Ovary (tissue), 10 donors: ENCODE measurements at regions of chr18 and their contacts with region 1.

Region 1: DNA sequence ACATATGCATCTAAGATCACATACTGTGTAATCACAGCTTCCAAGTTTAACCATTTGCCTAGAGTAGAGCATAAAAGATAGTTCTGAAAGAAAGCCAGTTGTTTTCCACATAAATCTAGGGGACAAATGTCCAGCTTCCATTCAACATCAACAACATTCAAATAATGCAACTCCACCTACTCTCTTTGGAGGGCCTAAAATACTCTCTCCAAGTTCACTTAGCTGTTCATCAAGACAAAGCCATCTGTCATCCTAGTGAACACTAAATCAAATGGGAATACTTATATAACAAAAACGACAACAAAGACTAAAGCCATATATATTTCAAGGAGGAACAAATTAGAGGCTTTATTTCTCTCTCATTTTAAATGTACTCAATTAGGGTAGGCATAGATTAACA is 221.5 kb upstream of the CDH2 start:
- DNase-seq: no peak
- H3K4me3 ChIP-seq: no peak overlapping the region
- H3K27ac ChIP-seq: no peak overlapping the region
- H3K4me1 ChIP-seq: no peaks in the 10 kb centered on the region
- H3K27me3 ChIP-seq: no peaks in the 10 kb centered on the region
- CTCF ChIP-seq: no peak
- EP300 ChIP-seq: no peak
- POLR2A ChIP-seq: no peak

Region 2: DNA sequence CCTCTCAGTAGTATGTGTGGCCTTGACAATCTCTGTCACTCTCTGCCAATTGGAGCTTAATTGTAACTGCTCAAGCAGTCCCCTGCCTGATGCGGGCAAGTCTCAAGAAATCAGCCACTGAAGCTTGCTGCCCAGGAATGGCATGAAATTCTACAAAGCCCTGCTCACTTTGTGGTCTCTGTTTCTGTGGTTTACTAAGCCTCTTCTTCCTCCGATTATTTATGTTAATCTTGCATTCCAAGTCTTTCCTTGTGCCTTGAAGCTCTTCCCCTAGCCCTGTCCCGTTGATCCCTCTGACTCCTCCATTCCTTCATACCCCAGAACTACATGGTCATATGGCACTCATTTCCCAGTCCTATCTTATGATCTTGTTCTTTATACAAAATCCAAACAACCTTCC is 724.1 kb before region 1 on chr18:
- intact Hi-C with region 1: no loop called
- DNase-seq: no peak
- H3K4me3 ChIP-seq: no peak overlapping the region
- H3K27ac ChIP-seq: no peak overlapping the region
- H3K4me1 ChIP-seq: no peaks in the 10 kb centered on the region
- H3K27me3 ChIP-seq: no peaks in the 10 kb centered on the region
- CTCF ChIP-seq: no peak
- EP300 ChIP-seq: no peak
- POLR2A ChIP-seq: no peak

Region 3: DNA sequence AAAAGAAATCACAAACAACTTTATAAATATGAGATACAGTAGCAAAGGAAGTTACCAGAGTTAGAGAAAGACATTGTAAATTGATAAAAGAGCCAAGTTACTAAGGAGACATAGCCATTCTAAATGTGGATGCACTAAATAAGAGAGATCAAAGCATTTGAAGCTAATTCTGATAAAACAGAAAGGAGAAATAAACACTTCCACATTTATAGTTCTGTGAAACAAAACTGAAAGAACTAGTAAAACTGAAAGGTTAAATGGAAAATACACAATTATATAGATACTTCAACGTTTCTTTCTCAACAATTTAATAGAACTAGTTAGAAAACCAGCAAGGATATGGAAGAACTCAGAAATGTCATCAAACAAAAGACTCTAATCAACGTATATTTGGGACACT is 87.4 kb after region 1 on chr18:
- intact Hi-C with region 1: loop called in 1 of 4 experiments (anchors 5 kb)
- DNase-seq: no peak
- H3K4me3 ChIP-seq: no peak overlapping the region
- H3K27ac ChIP-seq: no peak overlapping the region
- H3K4me1 ChIP-seq: no peaks in the 10 kb centered on the region
- H3K27me3 ChIP-seq: no peaks in the 10 kb centered on the region
- CTCF ChIP-seq: no peak
- EP300 ChIP-seq: no peak
- POLR2A ChIP-seq: no peak